ENCODE measurements at regions of chr2 and their contacts with region 1.

Region 1: DNA sequence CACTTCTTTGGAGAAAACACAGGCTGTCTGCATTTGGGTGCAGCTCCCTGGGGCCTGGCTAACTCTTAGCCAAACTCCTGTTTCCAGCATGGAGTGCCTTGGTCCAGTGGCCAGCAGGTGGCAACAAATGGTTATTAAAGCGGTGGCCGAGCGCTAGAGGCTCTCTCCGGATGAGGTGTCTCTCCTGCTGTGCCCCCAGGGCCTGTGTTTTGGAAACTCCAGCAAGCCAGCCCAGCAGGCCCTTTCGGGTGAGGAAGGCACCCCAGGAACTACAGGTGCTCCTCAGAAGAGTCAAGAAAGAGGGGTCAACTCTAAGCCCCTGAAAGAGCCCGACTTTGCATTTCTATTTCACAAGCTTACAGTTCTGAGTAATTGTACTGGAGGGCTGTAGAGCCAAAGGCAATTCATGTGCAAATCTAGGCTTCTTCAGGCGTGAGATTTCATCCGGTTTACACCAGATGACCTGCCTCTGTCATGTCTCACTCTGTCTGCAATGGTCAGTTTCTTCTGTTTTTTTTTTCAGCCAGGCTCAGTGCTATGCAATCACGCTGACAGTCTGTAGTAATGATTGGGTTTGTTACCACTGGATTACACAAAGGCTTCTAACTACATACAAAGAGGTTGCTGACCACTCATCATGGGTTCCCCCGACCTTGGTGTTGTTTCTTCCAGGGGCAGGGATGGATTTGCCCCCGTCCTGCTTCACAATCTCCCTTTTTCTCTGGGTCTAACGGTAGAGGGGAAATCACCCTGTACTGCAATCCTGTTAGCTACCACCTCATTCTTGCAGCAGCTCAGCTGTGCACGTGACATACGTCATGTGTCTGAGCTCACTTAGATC is 7.6 kb upstream of the CHRNA1 start:
- DNase-seq: peak; percentile 50
- H3K4me3 ChIP-seq: no peak overlapping the region
- H3K27me3 ChIP-seq: no peaks in the 10 kb centered on the region
- CTCF ChIP-seq: peak; percentile 85

Region 2: DNA sequence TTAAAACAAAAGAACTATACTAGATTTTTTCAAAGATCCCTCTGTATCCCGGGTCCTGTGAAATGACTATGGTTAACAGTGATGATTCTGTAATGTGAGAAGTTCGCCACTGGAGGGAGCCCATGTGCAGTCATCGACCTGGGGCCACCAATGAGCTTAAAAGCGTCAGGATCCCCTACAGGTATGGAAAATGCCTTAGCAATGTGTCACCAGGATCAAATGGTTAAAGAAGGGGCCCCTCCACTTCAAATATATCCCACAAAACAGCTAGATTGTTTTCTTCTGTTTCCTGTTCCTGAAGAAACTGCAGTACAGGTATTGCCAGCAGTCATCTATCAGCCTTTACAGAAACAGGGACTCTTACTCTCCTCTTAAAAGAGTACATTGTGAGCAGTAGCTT is 22.9 kb before region 1 on chr2:
- CTCF ChIA-PET with region 1: interaction called, 25 read pairs
- POLR2A ChIA-PET with region 1: no interaction called
- DNase-seq: no peak
- H3K4me3 ChIP-seq: no peak overlapping the region
- H3K27me3 ChIP-seq: peaks cover 3% of the 10 kb centered on the region; the same call in 1 of the 2 replicates
- CTCF ChIP-seq: peak; percentile 81

Region 3: DNA sequence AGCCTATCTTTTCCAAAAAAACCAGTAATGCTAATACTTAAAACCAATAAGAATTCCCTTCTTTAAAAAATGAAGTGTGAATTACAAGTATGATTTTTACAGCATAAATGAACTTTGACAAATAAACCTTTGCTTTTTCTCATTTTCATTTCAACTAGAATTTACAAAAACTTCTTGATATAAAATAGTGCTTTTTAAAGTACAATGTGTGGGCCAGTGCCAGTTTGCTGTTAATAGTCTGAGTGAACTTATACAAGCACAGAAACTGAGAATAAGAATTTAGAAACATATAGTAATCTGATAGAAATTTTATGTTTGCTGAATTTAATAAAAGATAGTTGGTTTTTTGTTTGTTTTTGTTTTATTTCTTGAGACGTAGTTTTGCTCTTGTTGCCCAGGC is 36.1 kb after region 1 on chr2:
- CTCF ChIA-PET with region 1: interaction called, 10 read pairs
- POLR2A ChIA-PET with region 1: no interaction called
- DNase-seq: no peak
- H3K4me3 ChIP-seq: no peak overlapping the region
- H3K27me3 ChIP-seq: no peaks in the 10 kb centered on the region
- CTCF ChIP-seq: no peak

Region 4: DNA sequence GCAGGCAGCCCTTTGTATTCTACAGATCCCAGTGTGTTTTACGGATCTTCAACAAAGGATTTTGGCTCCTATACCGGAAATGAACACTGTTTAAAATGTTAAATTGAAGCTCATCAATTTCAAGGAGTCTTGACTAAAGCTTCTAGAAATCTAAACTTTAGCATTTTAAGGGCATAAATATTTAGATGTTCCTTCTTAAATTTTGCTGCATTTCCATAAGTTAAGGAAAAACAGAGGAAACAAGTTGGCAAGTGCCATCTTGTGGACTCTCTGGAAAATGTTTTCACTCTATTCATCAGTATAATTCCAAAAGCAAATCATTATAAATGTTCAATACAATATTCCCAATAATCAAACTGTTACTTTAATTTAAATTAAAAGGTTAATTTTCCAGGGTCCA is 213.8 kb after region 1 on chr2:
- CTCF ChIA-PET with region 1: interaction called, 142 read pairs
- POLR2A ChIA-PET with region 1: interaction called, 4 read pairs
- DNase-seq: no peak
- H3K4me3 ChIP-seq: no peak overlapping the region
- H3K27me3 ChIP-seq: no peaks in the 10 kb centered on the region
- CTCF ChIP-seq: peak; percentile 57

Region 5: GRCh38 chr2:175002547-175003274 is 230.9 kb after region 1 on chr2:
- CTCF ChIA-PET with region 1: interaction called, 18 read pairs
- POLR2A ChIA-PET with region 1: no interaction called
- DNase-seq: no peak
- H3K4me3 ChIP-seq: no peak overlapping the region
- H3K27me3 ChIP-seq: peaks cover 4% of the 10 kb centered on the region
- CTCF ChIP-seq: no peak

Region 6: DNA sequence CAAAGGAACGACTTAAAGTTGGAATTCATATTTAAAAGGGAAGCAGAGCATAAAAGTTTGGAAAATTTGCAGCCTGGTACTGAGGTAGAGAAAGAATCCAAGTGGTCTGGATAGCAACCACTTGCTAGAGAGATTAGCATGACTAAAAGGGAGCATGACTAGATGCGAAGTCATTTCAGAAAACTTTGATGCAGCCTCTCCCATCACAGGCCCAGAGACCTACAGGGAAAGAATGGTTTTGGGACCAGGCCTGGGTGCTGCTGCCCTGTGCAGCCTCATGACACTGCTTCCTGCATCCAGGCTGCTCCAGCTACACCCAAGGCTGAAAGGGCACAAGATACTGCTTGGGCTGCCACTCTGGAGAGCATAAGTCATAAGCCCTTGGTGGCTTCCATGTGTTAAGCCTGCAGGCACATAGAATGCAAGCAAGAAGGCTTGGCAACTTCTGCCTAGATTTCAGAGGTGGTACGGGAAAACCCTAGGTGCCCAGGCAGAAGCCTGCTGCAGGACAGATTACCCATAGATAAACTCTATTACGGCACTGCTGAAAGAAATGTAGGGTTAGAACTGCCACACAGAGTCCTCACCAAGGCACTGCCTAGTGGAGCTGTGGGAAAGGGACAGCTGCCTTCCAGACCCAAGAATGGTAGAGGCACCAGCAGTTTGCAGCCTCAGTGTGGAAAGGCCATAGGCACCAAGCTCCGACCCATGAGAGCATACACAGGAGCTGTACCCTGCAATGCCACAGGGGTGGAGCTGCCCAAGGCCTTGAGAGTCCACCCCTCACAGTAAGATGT is 246.0 kb after region 1 on chr2:
- CTCF ChIA-PET with region 1: no interaction called
- POLR2A ChIA-PET with region 1: no interaction called
- DNase-seq: no peak
- H3K4me3 ChIP-seq: no peak overlapping the region
- H3K27me3 ChIP-seq: no peaks in the 10 kb centered on the region
- CTCF ChIP-seq: no peak

Region 7: DNA sequence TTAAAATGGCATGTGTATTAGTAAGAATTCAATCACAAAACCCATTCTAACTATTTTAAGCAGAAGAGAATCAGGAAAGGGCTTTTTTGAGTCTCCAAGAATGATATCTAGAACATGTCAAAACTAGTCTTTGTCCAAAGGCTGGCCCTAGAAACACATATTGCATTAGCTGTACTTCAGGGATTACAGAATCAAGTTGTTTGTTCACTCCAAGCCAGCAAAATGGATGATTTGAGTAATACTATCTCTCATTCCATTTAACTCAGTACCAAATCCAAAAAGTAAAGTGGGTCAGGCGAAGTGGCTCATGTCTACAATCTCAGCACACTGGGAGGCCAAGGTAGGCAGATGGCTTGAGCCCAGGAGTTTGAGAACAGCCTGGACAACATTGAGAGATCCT is 354.8 kb after region 1 on chr2:
- CTCF ChIA-PET with region 1: no interaction called
- POLR2A ChIA-PET with region 1: no interaction called
- DNase-seq: no peak
- H3K4me3 ChIP-seq: no peak overlapping the region
- H3K27me3 ChIP-seq: no peaks in the 10 kb centered on the region
- CTCF ChIP-seq: no peak

Measured in BJ (cell line).